PC-3 (cell line): ENCODE measurements at regions of chr4 and their contacts with region 1.

Region 1: DNA sequence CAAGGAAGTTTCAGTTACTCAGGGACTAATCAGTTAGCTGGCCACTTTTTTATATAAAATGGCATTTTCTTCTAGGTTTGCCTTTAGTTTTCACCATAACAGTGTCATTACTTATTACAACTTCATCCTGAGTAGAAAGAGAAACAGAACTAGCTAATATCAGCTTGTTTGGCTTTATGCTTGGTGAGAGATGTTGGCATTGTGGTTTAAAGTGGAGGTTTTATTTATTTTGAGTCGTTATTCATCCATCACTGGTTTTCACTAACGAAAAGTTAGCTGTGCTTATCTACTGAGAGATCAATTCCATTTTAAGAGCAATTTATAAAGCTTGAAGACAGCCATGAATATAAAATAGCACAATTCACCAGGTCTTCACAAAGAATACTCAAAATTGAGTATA is 714.5 kb downstream of the GRID2 start:
- DNase-seq: peak; percentile 4
- ATAC-seq: no peak; the same call in 1 of the 2 replicates
- H3K4me3 ChIP-seq: no peak overlapping the region
- H3K27ac ChIP-seq: no peak overlapping the region
- H3K4me1 ChIP-seq: no peaks in the 10 kb centered on the region
- H3K27me3 ChIP-seq: no peaks in the 10 kb centered on the region
- CTCF ChIP-seq: no peak

Region 2: DNA sequence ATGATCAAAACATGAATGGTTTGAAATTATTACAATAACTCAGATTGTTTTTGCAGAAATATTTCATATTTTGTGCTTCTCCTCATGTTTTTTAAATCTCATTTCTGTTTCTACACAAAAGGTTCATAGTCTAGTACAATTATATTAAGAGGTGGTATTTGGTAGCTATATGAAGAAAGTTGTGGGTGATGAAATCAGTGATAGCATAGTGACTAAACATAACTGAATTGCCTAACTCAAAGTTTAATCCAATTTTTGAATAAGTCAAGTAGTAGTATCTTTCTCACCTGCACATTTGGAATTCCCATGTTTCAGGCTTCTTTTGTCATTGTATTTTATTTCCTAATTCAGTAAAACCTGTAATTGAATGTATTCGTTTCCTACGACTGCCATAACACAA is 65.8 kb before region 1 on chr4:
- CTCF ChIA-PET with region 1: no interaction called
- POLR2A ChIA-PET with region 1: no interaction called
- intact Hi-C with region 1: no loop called
- DNase-seq: peak; percentile 42
- ATAC-seq: no peak
- H3K4me3 ChIP-seq: no peak overlapping the region
- H3K27ac ChIP-seq: peak overlapping the region; percentile 62
- H3K4me1 ChIP-seq: peaks cover 19% of the 10 kb centered on the region
- H3K27me3 ChIP-seq: no peaks in the 10 kb centered on the region
- CTCF ChIP-seq: no peak

Region 3: GRCh38 chr4:92996533-92996932 is 21.7 kb before region 1 on chr4:
- CTCF ChIA-PET with region 1: no interaction called
- POLR2A ChIA-PET with region 1: no interaction called
- intact Hi-C with region 1: no loop called
- DNase-seq: no peak
- ATAC-seq: no peak
- H3K4me3 ChIP-seq: no peak overlapping the region
- H3K27ac ChIP-seq: no peak overlapping the region
- H3K4me1 ChIP-seq: peaks cover 10% of the 10 kb centered on the region; the same call in 1 of the 2 replicates
- H3K27me3 ChIP-seq: no peaks in the 10 kb centered on the region
- CTCF ChIP-seq: no peak

Region 4: GRCh38 chr4:93029769-93030168 is 11.5 kb after region 1 on chr4:
- CTCF ChIA-PET with region 1: no interaction called
- POLR2A ChIA-PET with region 1: interaction called, 11 read pairs
- intact Hi-C with region 1: no loop called
- DNase-seq: no peak
- ATAC-seq: no peak
- H3K4me3 ChIP-seq: no peak overlapping the region
- H3K27ac ChIP-seq: no peak overlapping the region
- H3K4me1 ChIP-seq: no peaks in the 10 kb centered on the region
- H3K27me3 ChIP-seq: no peaks in the 10 kb centered on the region
- CTCF ChIP-seq: no peak